T-cell (primary cell): ENCODE measurements at regions of chr2 and their contacts with region 1.

Region 1: GRCh38 chr2:190679813-190680591 is 31.1 kb downstream of the NAB1 start:
- DNase-seq: peak; percentile 14 to 79 (median 53)
- ATAC-seq: peak; percentile 60 to 82 (median 78)
- H3K4me3 ChIP-seq: no peak overlapping the region
- H3K4me3 Mint-ChIP-seq: peak overlapping the region in 1 of 3 donors; percentile 3
- H3K27ac ChIP-seq: no peak overlapping the region
- H3K27ac Mint-ChIP-seq: peak overlapping the region in 1 of 2 donors; percentile 73
- H3K4me1 ChIP-seq: peaks cover 10 to 17% of the 10 kb centered on the region in 2 experiments
- H3K4me1 Mint-ChIP-seq: peaks cover 38 to 43% (median 40%) of the 10 kb centered on the region in 3 donors
- H3K27me3 ChIP-seq: no peaks in the 10 kb centered on the region
- H3K27me3 Mint-ChIP-seq: no peaks in the 10 kb centered on the region

Region 2: GRCh38 chr2:190649035-190649797 is 30.8 kb before region 1 on chr2 and contains the start of gene NAB1:
- CTCF ChIA-PET with region 1: interaction called in 1 of 2 experiments, 17 read pairs
- POLR2A ChIA-PET with region 1: no interaction called
- DNase-seq: peak in 31 of 35 experiments; percentile 10 to 75 (median 42)
- ATAC-seq: peak; percentile 42 to 67 (median 64)
- H3K4me3 ChIP-seq: peak within 1 kb of the TSS; percentile 82 to 92
- H3K4me3 Mint-ChIP-seq: peak within 1 kb of the TSS; percentile 90 to 93 (median 91)
- H3K27ac ChIP-seq: peak within 1 kb of the TSS; percentile 90
- H3K27ac Mint-ChIP-seq: peak within 1 kb of the TSS; percentile 82 to 91
- H3K4me1 ChIP-seq: peaks cover 13% of the 10 kb centered on the region in 2 experiments
- H3K4me1 Mint-ChIP-seq: peaks cover 38 to 41% (median 41%) of the 10 kb centered on the region in 3 donors
- H3K27me3 ChIP-seq: no peaks in the 10 kb centered on the region
- H3K27me3 Mint-ChIP-seq: no peaks in the 10 kb centered on the region
- total RNA-seq, gene NAB1: 17.7 to 22.1 (median 19.2) TPM